ENCODE measurements at regions of chr12 and their contacts with region 1.

Region 1: GRCh38 chr12:128259556-128260070 is 7.4 kb upstream of the TMEM132C start:
- DNase-seq: peak; percentile 52
- H3K4me3 ChIP-seq: peak overlapping the region in 1 of 2 experiments; percentile 48; a peak in 1 of 4 replicates
- H3K27ac ChIP-seq: no peak overlapping the region
- H3K4me1 ChIP-seq: no peaks in the 10 kb centered on the region
- H3K27me3 ChIP-seq: no peaks in the 10 kb centered on the region
- CTCF ChIP-seq: peak; percentile 37
- EP300 ChIP-seq: no peak
- RAD21 ChIP-seq: peak; percentile 75

Region 2: DNA sequence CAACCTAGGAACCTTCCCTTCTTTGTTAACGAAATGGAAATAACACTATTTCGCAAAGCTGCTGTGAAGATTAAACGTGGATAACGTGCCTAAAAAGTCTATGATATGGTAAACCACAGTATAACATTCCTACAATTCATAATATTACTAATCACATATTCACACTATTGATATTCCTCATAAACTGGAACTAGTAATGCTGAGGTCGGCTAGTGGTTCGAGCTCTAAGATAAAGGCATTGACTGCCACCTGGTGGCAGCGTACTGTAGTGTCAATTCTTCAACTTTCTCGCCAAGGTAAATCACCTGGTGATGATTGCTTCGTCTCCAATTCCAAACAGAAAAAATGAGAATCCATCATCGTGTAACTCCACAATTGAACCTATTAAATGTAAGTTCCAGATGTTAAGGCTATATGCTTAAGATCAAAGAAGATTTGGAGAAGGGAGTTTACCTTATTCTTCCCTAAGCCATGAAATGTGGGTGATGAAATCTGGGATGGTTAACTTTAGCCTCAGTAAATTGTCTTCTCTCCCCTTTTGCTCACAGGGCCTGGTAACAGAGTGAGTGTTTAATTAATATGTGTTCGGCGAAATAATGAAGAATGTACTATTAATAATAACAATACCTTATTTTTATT is 190.1 kb before region 1 on chr12:
- CTCF ChIA-PET with region 1: interaction called, 16 read pairs
- POLR2A ChIA-PET with region 1: no interaction called
- DNase-seq: peak; percentile 46
- H3K4me3 ChIP-seq: no peak overlapping the region
- H3K27ac ChIP-seq: no peak overlapping the region
- H3K4me1 ChIP-seq: no peaks in the 10 kb centered on the region
- H3K27me3 ChIP-seq: no peaks in the 10 kb centered on the region
- CTCF ChIP-seq: peak; percentile 68
- EP300 ChIP-seq: no peak
- RAD21 ChIP-seq: peak; percentile 74

Region 3: DNA sequence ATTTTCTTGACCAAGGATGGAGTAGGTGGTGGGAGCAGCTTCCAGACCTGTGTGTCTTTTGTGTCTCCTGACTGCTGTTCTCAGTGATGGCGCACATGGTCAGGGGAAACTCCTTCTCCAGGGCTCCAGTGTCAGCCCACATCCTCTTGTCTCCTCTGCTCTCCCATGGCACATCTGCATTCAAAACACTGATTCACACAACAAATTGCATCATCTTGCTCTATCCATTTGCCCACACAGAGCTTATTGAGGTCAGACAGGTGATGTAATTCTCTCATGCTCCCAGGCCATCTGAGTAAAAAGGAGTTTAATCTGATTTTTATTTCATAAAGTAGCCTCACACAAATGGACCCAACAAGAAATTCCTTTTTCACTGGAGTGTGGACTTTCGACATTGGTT is 14.5 kb before region 1 on chr12:
- CTCF ChIA-PET with region 1: interaction called, 50 read pairs
- POLR2A ChIA-PET with region 1: interaction called, 4 read pairs
- DNase-seq: peak; percentile 31
- H3K4me3 ChIP-seq: no peak overlapping the region
- H3K27ac ChIP-seq: peak overlapping the region in 1 of 2 experiments; percentile 79; a peak in 2 of 4 replicates
- H3K4me1 ChIP-seq: peaks cover 0 to 11% of the 10 kb centered on the region in 2 experiments; a peak in 1 of 4 replicates
- H3K27me3 ChIP-seq: no peaks in the 10 kb centered on the region
- CTCF ChIP-seq: no peak
- EP300 ChIP-seq: peak in 1 of 2 experiments; percentile 40; a peak in 1 of 4 replicates
- RAD21 ChIP-seq: no peak

Region 4: GRCh38 chr12:128298091-128298748 is 38.6 kb after region 1 on chr12:
- CTCF ChIA-PET with region 1: no interaction called
- POLR2A ChIA-PET with region 1: no interaction called
- DNase-seq: no peak
- H3K4me3 ChIP-seq: no peak overlapping the region
- H3K27ac ChIP-seq: no peak overlapping the region
- H3K4me1 ChIP-seq: no peaks in the 10 kb centered on the region
- H3K27me3 ChIP-seq: no peaks in the 10 kb centered on the region
- CTCF ChIP-seq: no peak
- EP300 ChIP-seq: no peak
- RAD21 ChIP-seq: no peak

Region 5: DNA sequence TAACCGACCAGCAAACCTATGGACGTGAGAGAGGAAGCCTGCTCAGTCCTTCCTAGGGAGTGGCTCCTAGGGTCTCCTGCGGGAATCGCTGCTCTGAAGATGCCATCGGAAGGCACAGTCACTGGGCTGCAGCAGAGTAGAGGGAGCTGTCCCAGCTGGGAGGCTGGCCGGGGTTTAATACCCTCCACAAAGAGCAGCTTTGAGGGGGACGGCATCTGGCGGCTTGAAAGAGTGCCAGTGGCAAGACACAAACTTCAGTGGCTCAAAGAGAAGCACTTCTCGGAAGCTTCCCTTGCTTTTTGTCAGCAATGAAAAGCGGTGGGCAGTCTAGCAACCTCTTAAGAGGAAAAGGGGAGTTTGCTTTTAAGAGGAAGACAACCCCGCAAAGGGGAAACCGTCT is 121.9 kb after region 1 on chr12:
- CTCF ChIA-PET with region 1: interaction called, 87 read pairs
- POLR2A ChIA-PET with region 1: no interaction called
- DNase-seq: no peak
- H3K4me3 ChIP-seq: no peak overlapping the region
- H3K27ac ChIP-seq: no peak overlapping the region
- H3K4me1 ChIP-seq: no peaks in the 10 kb centered on the region
- H3K27me3 ChIP-seq: no peaks in the 10 kb centered on the region
- CTCF ChIP-seq: no peak
- EP300 ChIP-seq: no peak
- RAD21 ChIP-seq: no peak

Region 6: DNA sequence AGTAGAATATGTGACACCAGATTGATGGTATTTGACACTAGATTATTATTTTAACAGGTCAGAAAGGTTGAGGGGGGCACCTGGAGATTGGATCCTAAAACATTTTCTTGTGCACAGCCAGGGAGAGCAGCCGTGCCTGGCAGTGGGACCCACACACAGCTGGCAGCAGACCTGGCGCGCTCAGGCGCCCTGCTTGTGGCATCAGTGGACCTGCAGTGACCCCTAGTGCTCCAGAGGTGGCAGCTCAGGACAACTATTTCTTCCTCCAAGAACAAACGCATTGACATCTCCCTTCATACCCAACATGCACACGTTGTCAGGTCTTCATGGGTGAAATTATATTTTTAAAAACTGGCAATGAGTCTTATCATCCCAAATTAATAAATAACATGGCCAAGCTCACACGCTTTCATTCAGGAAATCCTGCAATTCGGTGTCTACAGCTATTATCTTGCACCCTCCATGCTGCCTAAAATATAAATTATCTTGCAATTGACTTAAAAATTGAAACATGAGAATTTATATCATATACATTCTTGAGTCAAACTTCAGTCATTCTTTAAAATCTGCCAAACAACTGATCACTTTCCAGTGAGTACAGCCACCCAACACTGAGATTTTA is 1651.9 kb after region 1 on chr12:
- CTCF ChIA-PET with region 1: interaction called, 10 read pairs
- POLR2A ChIA-PET with region 1: no interaction called
- DNase-seq: peak; percentile 80
- H3K4me3 ChIP-seq: no peak overlapping the region
- H3K27ac ChIP-seq: no peak overlapping the region
- H3K4me1 ChIP-seq: no peaks in the 10 kb centered on the region
- H3K27me3 ChIP-seq: no peaks in the 10 kb centered on the region
- CTCF ChIP-seq: peak; percentile 29; the same call in 1 of the 2 replicates
- EP300 ChIP-seq: no peak
- RAD21 ChIP-seq: peak; percentile 96